GM10248 (cell line): ENCODE measurements at regions of chr2 and their contacts with region 1.

Region 1: DNA sequence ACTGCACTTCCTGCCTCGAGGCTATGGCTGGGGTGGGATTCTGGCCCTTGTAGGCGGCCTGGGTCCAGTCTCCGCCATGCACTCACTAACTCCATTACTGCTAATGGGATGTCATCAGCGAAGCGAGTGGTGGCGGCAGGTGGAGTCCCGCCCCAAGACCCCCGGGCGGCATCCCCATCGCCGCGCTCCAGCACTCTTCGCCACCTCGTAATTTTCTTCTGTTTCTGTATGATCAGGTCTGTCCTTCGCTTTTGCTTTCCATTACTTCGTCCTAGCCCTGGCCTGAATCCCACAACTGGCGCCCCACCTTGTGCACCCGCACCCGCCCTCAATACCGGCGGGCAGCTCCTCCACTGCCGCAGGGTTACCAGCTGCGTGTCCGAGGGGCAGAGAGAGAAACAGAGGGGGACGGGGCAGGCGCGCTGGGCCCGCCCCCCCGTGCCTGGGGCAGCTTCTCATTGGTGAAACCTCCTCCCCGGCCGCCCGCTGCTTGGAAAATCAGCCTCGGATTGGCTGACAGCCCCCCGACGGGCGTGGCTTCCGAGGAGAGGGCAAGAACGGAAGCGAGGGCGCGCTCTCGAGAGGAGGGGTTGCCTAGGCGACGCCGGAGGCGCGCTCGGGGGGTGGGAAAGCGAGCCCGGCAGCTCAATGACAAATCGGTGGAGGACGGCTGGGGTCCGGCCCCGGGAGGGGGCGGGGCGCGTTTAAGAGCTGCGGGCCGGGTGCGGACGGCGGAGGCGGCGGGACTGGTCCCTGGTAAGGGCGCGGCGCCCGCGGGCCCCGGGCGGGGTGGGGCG is at the start of gene RALB:
- DNase-seq: peak; percentile 99
- CTCF ChIP-seq: no peak

Region 2: DNA sequence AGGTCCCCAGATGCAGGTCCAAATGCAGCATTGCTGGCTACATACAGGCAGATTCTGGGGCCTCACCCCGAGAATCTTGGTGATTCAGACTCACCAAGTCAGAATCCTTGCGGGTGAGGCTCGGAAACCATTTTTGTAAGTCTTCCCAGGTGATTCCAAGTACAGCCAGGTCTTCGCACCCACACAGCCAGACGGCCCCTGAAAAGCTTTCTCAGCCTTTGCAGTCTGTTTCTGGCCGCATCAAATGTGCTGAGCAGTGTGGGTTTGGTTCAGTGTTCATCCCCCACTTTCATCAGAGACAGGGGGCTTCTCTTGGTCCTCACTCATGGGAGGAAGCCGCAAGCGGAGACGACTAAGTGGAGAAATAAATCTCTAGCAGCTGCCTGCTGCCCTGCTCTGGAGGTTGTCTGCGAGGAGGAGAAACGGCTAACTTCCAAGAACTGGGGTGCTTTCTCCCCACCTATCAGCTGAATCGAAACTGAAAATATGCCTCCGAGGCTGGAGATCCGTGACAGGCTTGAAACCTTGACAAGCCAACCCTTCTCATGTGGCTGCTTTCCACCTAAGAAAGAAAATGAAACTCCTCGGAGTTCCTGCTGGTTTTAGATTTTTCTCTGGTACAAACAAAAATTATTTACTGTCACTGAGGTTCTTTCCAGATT is 20.3 kb before region 1 on chr2:
- CTCF ChIA-PET with region 1: interaction called, 13 read pairs
- POLR2A ChIA-PET with region 1: interaction called, 5 read pairs
- DNase-seq: peak; percentile 83
- CTCF ChIP-seq: no peak

Region 3: GRCh38 chr2:120825370-120826259 is 573.2 kb after region 1 on chr2:
- CTCF ChIA-PET with region 1: no interaction called
- POLR2A ChIA-PET with region 1: no interaction called
- DNase-seq: no peak
- CTCF ChIP-seq: no peak